SK-N-SH (cell line): ENCODE measurements at regions of chr12 and their contacts with region 1.

Region 1: DNA sequence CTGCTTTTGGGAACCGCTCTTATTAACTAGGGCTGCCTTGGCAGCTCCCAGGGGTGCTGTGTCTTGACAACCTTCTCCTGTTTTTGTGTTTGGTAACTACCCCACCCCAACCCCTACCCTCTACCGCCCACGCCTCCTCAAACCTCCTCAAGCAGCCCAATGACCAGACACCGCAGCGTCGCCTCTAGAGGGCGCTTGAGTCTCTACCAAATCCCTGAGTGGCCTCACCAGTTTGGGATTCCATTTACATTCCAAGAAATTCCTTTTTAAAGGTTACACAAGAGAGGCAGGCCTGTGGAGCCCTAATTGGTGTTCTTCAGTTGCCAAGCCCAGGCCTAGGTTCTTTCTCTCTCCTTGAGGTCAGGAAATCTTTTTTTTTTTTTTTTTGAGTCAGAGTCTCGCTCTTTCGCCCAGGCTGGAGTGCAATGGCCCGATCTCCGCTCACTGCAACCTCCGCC is 72.3 kb upstream of the USP44 start:
- DNase-seq: peak; percentile 69
- H3K4me3 ChIP-seq: peak overlapping the region in 1 of 2 experiments; percentile 56; a peak in 1 of 4 replicates
- H3K27ac ChIP-seq: no peak overlapping the region
- H3K4me1 ChIP-seq: no peaks in the 10 kb centered on the region
- H3K27me3 ChIP-seq: no peaks in the 10 kb centered on the region
- CTCF ChIP-seq: peak; percentile 73
- EP300 ChIP-seq: no peak
- RAD21 ChIP-seq: peak; percentile 84

Region 2: DNA sequence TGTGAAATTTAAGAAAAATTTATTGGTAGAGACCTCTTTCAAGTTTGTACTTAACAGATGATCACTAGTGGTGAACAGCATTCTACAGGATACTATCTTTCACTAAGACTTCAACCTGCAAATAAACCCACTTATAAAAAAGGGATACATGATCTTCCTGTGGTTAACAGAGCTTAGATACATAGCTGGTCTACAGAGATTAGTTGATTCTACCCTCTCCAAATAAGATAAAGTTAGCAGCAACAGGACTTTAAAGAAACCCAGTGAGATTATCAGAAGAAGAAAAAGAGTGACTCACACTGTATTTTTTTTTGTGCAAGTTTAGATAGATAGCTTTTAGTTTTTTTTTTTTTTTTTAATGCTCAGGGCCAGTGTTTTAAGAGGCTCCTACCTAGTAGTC is 106.9 kb before region 1 on chr12:
- CTCF ChIA-PET with region 1: no interaction called
- POLR2A ChIA-PET with region 1: no interaction called
- DNase-seq: no peak
- H3K4me3 ChIP-seq: no peak overlapping the region
- H3K27ac ChIP-seq: no peak overlapping the region
- H3K4me1 ChIP-seq: no peaks in the 10 kb centered on the region
- H3K27me3 ChIP-seq: no peaks in the 10 kb centered on the region
- CTCF ChIP-seq: no peak
- EP300 ChIP-seq: no peak
- RAD21 ChIP-seq: no peak

Region 3: DNA sequence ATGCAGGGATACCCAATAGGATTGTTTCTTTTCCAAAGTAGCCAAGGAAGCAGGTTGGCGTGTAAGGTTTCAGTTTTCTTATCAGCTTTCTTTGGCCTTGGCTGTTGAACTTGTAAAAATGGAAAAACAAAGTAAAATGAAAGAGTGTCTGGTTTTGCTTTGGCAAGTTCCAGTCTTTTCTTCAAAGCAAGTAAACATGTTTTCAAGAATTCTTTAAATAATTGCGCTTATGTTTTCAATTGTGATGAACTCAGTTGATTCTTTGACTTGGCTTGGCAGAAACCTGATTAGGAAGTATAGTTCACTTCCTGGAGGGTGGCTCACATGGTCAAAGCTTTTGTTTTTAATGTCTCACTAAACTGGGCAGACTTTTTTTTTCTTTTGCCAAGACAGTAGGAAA is 39.9 kb after region 1 on chr12:
- CTCF ChIA-PET with region 1: no interaction called
- POLR2A ChIA-PET with region 1: no interaction called
- DNase-seq: no peak
- H3K4me3 ChIP-seq: no peak overlapping the region
- H3K27ac ChIP-seq: no peak overlapping the region
- H3K4me1 ChIP-seq: no peaks in the 10 kb centered on the region
- H3K27me3 ChIP-seq: no peaks in the 10 kb centered on the region
- CTCF ChIP-seq: no peak
- EP300 ChIP-seq: no peak
- RAD21 ChIP-seq: no peak

Region 4: GRCh38 chr12:95739561-95740313 is 116.1 kb after region 1 on chr12:
- CTCF ChIA-PET with region 1: no interaction called
- POLR2A ChIA-PET with region 1: no interaction called
- DNase-seq: no peak
- H3K4me3 ChIP-seq: no peak overlapping the region
- H3K27ac ChIP-seq: no peak overlapping the region
- H3K4me1 ChIP-seq: no peaks in the 10 kb centered on the region
- H3K27me3 ChIP-seq: peaks cover 3% of the 10 kb centered on the region; the same call in 1 of the 2 replicates
- CTCF ChIP-seq: no peak
- EP300 ChIP-seq: no peak
- RAD21 ChIP-seq: no peak

Region 5: GRCh38 chr12:95809000-95809680 is 185.5 kb after region 1 on chr12:
- CTCF ChIA-PET with region 1: interaction called, 15 read pairs
- POLR2A ChIA-PET with region 1: no interaction called
- DNase-seq: no peak
- H3K4me3 ChIP-seq: no peak overlapping the region
- H3K27ac ChIP-seq: no peak overlapping the region
- H3K4me1 ChIP-seq: peaks cover 0 to 9% of the 10 kb centered on the region in 2 experiments; a peak in 2 of 4 replicates
- H3K27me3 ChIP-seq: peaks cover 5% of the 10 kb centered on the region; the same call in 1 of the 2 replicates
- CTCF ChIP-seq: no peak
- EP300 ChIP-seq: no peak
- RAD21 ChIP-seq: no peak